ENCODE measurements at regions of chr3 and their contacts with region 1.

Region 1: GRCh38 chr3:73502609-73503583 is 121.8 kb downstream of the PDZRN3 start:
- ATAC-seq: peak; percentile 61 to 87 (median 76)
- H3K4me3 ChIP-seq: no peak overlapping the region
- H3K27ac ChIP-seq: no peak overlapping the region
- H3K4me1 ChIP-seq: peaks cover 13 to 18% of the 10 kb centered on the region in 2 donors

Region 2: DNA sequence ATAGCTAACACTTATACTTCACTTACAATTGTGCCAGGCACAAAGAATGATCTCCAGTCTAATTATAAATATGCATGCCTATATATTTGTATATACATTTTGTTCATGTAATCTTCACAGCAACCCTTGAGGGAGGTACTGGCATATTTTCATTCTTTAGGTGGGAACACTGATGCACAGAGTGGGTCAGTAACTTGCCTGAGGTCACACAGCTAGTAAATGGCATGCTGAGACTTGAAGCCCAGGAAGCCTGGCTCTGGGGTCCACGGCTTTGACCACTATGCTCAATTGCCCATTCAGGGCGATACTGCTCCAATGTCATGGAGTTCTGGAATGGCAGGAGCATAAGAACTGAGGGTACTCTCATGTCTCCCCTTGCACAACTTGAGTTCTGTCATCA is 794.5 kb before region 1 on chr3:
- in situ Hi-C with region 1: no loop called
- ATAC-seq: no peak
- H3K4me3 ChIP-seq: no peak overlapping the region
- H3K27ac ChIP-seq: no peak overlapping the region
- H3K4me1 ChIP-seq: no peaks in the 10 kb centered on the region

Region 3: GRCh38 chr3:73766599-73767381 is 263.9 kb after region 1 on chr3:
- in situ Hi-C with region 1: loop called in 1 of 9 experiments (anchors 25 kb)
- ATAC-seq: peak in 3 of 8 experiments; percentile 64 to 75 (median 72)
- H3K4me3 ChIP-seq: no peak overlapping the region
- H3K27ac ChIP-seq: no peak overlapping the region
- H3K4me1 ChIP-seq: no peaks in the 10 kb centered on the region

Measured in motor neuron (in vitro differentiated cells).